ENCODE measurements at regions of chr2 and their contacts with region 1.

Region 1: DNA sequence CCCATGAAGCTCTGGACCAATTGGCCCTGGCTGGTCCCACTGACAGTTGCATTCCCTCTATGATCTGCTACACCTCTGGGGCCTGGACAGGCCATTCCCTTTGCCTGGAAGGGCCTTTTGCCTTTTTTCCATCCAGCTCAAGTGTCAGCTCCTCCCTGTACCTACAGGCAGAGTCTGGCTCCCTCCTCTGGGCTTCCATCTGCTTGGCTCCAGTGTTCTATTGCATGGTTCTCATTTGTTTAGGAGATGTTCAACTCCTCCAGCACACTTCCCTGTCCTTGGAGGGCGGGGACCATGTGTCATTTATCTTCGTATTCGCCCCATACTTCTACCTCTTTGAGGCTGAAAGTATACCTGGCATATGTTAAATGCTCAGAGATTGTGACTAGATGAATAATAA is 61.1 kb downstream of the PRKCE start:
- DNase-seq: peak; percentile 38
- ATAC-seq: peak; percentile 58
- H3K4me3 ChIP-seq: no peak overlapping the region
- H3K27ac ChIP-seq: no peak overlapping the region
- H3K4me1 ChIP-seq: peaks cover 15% of the 10 kb centered on the region
- H3K27me3 ChIP-seq: no peaks in the 10 kb centered on the region
- CTCF ChIP-seq: peak; percentile 32; the same call in 1 of the 2 replicates

Region 2: DNA sequence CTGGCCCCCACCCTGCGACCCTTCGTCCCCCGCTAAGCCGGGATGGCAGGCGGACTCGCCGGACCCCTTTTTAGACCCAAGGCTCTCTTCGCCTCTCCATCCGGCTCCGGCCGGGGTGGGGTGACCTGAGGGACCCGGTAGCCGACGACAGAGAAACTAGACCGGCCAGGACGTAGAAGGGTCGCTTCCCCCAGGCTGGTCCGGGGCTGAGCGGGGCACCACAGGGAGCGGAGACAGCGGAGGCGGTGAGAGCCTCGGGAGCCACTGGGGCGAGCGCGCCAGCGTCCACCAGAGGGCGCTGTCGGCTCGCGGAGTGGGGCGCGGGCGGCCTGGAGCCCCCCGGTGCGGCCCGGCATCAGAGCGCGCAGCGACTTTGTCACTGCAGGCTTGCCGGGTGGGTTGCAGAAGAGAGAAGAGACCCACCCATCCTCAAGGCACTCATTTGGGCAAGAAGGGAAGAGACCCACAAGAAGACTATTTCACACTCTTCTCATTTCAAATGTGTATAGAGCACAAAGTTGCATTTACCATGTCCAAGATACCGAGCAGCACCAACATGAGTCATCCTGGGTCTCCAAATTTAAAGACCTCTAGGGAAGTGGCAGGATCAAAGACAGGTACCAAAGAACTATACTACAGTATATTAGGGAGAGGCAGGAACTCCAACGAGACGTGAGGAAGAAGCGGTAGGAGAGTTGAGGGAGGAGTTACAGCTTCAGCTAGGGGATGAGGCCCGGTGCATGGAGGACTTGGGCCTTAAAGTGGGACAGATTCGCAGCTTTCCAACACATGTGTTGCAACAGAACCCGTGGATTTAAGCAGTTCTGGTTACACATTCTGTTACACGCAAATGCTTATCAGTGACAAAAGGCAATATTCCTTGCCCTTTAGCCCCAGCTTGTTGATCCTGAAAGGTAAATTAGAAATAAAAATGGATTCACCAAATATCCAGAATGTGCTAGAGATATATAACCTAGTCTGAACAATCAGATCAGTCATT is 68.7 kb before region 1 on chr2:
- CTCF ChIA-PET with region 1: interaction called, 4 read pairs
- POLR2A ChIA-PET with region 1: no interaction called
- intact Hi-C with region 1: loop called (anchors 1 kb)
- DNase-seq: peak; percentile 84
- ATAC-seq: peak; percentile 99
- H3K4me3 ChIP-seq: peak overlapping the region; percentile 80
- H3K27ac ChIP-seq: no peak overlapping the region
- H3K4me1 ChIP-seq: 0 out of 2 replicates have a peak, but pooled peaks cover 4% of the 10 kb centered on the region
- H3K27me3 ChIP-seq: no peaks in the 10 kb centered on the region
- CTCF ChIP-seq: peak; percentile 95